ENCODE measurements at regions of chr1 and their contacts with region 1.

Region 1: DNA sequence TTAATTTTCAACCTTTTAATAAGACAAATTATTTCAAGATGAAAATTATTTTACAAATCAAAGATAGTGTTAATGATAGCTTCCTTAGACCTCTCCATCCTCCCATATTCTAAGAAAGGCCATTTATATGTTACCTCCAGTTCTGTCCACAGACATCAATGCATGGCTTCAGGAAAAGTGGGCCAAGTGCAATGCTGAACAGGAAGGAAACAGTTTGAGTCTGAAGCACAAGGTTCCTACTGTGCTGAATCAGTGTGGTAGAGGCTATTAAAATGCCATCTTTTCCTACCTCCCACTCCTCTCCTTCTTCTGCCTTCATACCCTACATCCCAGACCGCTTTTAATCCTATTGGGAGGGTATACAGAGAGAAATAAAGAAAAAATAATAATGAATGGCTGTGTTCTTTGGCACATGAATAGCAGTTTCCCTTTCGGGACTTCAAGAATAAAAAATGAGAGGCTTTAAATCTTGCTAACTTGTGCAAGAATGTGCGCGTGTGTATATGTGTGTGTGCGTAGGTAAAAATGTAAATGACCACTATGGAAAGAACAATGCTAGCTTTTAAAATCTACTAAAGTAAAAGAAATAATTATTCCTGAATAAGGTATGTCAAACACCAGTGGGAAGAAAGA is 62.6 kb upstream of the C1orf105 start:
- DNase-seq: no peak
- H3K4me3 Mint-ChIP-seq: peak overlapping the region; percentile 6
- H3K27ac Mint-ChIP-seq: peak overlapping the region; percentile 83
- H3K4me1 Mint-ChIP-seq: peaks cover 56% of the 10 kb centered on the region
- H3K27me3 Mint-ChIP-seq: no peaks in the 10 kb centered on the region

Region 2: DNA sequence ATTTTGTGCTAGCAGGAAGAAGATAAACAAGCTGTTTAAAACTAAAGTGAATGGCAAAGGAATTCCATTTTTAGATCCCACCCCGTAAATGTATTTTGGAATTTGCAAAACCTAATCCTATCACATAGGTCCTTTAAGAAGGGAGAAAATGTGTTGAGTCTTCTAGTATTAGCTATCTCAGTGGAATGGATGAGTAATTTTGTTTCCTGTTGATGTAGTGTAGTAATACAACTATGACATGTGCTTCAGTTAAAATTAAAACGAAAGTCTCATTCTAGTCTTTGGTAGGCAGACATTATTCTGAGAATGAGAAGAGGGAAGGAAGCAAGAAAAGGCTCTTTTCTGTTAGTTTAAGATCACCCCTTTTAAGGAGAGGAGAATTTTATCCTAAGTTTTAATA is 203.3 kb before region 1 on chr1:
- intact Hi-C with region 1: loop called (anchors 1 kb)
- DNase-seq: no peak
- H3K4me3 Mint-ChIP-seq: peak overlapping the region; percentile 23
- H3K27ac Mint-ChIP-seq: peak overlapping the region; percentile 87
- H3K4me1 Mint-ChIP-seq: peaks cover 7% of the 10 kb centered on the region
- H3K27me3 Mint-ChIP-seq: peaks cover 3% of the 10 kb centered on the region

Region 3: GRCh38 chr1:172343240-172344160 is 14.4 kb before region 1 on chr1:
- intact Hi-C with region 1: loop called (anchors 1 kb)
- DNase-seq: no peak
- H3K4me3 Mint-ChIP-seq: no peak overlapping the region
- H3K27ac Mint-ChIP-seq: peak overlapping the region; percentile 1
- H3K4me1 Mint-ChIP-seq: peaks cover 49% of the 10 kb centered on the region
- H3K27me3 Mint-ChIP-seq: no peaks in the 10 kb centered on the region

Region 4: GRCh38 chr1:172380441-172381244 is 22.8 kb after region 1 on chr1:
- intact Hi-C with region 1: loop called (anchors 1 kb)
- DNase-seq: no peak
- H3K4me3 Mint-ChIP-seq: peak overlapping the region; percentile 69
- H3K27ac Mint-ChIP-seq: peak overlapping the region; percentile 59
- H3K4me1 Mint-ChIP-seq: peaks cover 39% of the 10 kb centered on the region
- H3K27me3 Mint-ChIP-seq: peaks cover 4% of the 10 kb centered on the region

Region 5: DNA sequence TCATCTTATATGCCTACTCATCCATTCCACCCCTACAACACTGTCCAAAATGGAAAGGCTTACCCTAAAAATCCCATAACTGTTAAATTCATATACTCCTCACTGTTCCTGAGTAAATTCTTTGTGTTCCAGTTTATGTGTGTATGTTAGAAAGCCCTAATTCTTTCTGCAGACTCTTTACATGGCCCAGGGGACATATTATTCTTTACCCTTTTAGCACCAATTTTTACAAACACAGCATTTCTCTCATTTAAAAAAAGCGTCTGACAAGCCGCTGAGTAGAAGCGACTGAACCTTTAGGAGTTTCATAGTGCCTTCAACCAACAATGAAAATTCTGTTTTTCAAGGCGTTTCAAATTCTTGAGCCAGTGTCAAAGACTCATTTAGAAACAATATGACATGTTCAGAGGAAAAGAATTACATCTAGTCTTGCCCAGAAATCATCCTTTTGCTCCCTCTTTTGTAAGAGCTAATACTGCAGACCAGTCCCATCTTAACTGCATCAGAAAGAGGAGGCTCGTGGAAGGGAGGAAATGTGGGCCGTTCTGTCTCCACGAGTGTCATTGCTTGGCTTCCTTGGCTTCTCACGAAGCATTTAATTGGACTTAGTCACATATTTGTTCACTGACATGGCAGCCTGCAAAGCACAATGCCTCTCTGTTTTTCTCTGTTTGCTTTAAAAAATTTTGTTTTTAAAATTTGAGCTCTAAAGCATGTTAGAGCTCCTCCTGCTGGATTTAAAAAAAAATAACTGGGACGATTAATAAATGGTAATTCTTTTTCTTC is 41.3 kb after region 1 on chr1:
- intact Hi-C with region 1: loop called (anchors 1 kb)
- DNase-seq: no peak
- H3K4me3 Mint-ChIP-seq: no peak overlapping the region
- H3K27ac Mint-ChIP-seq: peak overlapping the region; percentile 4
- H3K4me1 Mint-ChIP-seq: peaks cover 52% of the 10 kb centered on the region
- H3K27me3 Mint-ChIP-seq: no peaks in the 10 kb centered on the region

Region 6: DNA sequence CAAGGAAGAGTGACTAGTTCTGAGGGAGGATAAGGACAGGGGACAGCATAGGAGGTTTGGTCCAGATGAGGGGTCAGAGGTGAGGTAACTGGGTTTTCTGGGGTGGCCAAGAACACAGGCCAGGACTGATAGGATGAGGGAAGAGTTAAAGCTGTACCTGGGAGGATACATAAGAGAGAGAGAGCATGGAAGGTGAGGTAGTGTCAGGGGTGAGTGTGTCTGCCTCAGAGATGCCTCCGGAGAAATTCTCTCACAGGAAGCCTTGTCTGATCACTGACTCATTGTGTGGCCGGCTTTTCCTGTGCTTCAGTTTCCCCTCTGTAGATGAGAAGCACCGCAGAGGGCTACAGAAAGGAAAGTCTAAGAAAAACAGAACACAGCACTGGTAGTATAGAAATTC is 341.2 kb after region 1 on chr1:
- intact Hi-C with region 1: loop called (anchors 2 kb)
- DNase-seq: peak; percentile 72
- H3K4me3 Mint-ChIP-seq: peak overlapping the region; percentile 62
- H3K27ac Mint-ChIP-seq: peak overlapping the region; percentile 88
- H3K4me1 Mint-ChIP-seq: no peaks in the 10 kb centered on the region
- H3K27me3 Mint-ChIP-seq: no peaks in the 10 kb centered on the region